ENCODE measurements at regions of chr6 and their contacts with region 1.

Region 1: DNA sequence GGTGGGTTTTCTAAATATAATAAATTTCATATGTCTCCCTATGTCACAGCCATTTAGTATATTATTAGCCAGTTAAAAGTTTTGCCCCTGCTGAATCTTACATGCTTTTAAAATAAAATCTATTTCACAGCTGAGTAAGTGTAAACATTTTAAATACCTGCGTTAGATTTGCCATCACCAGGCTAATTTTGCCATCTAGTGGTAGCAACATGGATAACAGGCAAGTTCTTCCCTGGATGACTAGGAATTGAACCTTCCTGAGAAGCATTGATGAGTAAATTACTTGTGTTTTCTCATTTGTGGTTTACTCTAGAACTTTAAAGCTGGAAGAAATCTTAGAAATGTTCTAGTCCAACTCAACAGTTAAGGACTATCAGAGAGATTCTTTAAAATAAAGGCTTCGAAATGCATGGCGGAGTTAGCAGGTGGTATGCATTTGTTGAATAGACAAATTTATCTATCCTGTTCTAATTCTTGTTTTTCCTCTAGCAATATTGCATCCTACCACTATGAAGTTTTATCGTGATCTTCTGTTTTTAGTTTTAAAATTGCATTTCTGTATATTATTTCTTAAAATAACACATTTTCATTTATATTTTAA is 2.6 kb downstream of the PRSS35 start:
- DNase-seq: peak; percentile 57
- H3K4me3 ChIP-seq: no peak overlapping the region
- H3K27ac ChIP-seq: no peak overlapping the region
- H3K4me1 ChIP-seq: peaks cover 2% of the 10 kb centered on the region
- H3K27me3 ChIP-seq: no peaks in the 10 kb centered on the region
- CTCF ChIP-seq: peak; percentile 75 to 87 (median 85)
- POLR2A ChIP-seq: no peak

Region 2: DNA sequence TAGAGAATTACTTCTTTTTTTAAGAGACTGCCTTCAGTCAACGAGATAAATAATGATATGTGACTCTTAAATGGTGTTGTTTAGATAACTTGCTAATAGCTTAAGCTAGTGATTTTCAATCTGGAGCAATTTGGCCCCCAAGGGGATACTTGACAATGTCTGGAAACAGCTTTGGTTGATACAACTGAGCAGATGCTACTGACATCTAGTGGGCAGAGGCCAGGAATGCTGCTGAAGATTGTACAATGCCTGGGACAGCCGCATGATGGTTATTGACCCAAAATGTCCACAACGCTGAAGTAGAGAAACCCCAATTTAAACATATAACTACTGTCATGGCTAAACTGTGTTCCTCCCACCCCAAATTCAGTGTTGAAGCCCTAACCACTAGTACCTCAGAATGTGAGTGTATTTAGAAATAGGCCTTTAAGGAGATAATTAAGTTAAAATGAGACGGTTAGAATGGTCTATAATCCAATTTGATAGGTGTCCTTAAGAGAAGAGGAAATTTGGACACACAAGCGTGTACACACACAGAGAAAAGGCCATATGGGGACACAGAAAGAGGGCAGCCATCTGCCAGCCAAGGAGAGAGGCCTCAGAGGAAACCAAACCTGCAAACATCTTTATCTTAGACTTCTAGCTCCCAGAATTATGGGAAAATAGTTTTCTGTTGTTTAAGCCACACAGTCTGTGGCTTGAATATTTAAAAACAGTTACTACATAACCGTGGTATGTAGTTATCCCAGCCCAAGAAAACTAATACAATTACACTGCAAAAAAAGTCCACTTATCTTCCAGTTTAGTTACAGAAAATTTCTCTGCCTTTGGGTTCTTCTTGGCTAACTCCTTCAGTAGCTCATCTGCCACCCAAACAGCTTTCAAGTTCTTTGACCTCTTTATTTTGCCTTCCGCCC is 299.6 kb before region 1 on chr6:
- intact Hi-C with region 1: loop called (anchors 10 kb)
- DNase-seq: peak; percentile 82
- H3K4me3 ChIP-seq: no peak overlapping the region
- H3K27ac ChIP-seq: no peak overlapping the region
- H3K4me1 ChIP-seq: no peaks in the 10 kb centered on the region
- H3K27me3 ChIP-seq: no peaks in the 10 kb centered on the region
- CTCF ChIP-seq: peak; percentile 38 to 68 (median 65)
- POLR2A ChIP-seq: no peak

Region 3: DNA sequence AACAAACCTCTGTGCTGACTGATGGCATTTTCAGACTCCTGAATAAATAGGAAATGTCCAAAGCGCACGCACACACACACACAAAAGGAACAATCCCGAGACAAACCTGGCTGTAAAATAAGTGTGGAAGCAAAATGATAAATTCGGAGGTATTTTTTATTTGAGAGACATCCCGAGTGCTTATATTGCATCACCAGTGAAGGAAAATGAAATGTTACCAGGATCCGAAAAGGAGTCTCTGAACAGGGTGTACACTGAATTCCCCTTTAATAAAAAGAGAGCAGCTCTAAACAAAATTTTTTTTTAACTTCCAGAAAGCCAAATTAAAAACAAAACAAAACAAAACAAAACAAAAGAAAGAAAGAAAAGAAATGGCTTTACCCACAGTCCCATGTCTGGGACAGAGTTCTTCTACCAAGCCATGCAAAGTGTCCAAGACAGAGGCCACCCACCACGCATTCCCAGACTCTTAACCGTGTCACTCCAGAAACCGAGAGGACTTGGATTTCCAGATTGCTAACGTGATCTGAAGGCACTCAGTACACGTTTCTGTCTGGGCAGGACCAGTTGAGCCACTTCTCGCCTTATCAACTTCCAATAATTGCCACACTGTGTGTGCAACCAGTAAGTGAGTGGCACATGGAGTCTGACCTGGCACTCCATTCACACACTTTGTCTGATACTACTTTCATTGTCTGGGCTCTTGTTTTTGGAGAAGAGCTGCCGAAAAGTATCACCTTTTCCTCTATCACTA is 84.9 kb before region 1 on chr6:
- intact Hi-C with region 1: loop called (anchors 10 kb)
- DNase-seq: peak; percentile 70
- H3K4me3 ChIP-seq: peak overlapping the region; percentile 79 to 89
- H3K27ac ChIP-seq: peak overlapping the region; percentile 88 to 91
- H3K4me1 ChIP-seq: peaks cover 9% of the 10 kb centered on the region
- H3K27me3 ChIP-seq: no peaks in the 10 kb centered on the region
- CTCF ChIP-seq: no peak
- POLR2A ChIP-seq: no peak

Region 4: DNA sequence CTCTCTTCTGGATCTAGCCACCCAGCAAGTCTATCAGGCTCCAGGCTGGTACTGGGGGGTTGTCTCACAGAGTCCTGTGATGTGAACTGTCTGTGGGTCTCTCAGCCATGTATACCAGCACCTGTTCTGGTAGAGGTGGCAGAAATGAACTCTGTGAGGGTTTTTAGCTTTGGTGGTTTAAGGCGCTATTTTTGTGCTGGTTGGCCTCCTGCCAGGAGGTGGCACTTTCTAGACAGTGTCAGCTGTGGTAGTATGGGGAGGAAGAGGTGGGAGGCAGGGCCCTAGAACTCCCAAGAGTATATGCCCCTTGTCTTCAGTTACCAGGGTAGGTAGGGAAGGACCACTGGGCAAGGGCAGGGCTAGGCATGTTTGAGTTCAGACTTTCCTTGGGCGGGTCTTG is 118.2 kb after region 1 on chr6:
- intact Hi-C with region 1: no loop called
- DNase-seq: no peak
- H3K4me3 ChIP-seq: no peak overlapping the region
- H3K27ac ChIP-seq: no peak overlapping the region
- H3K4me1 ChIP-seq: no peaks in the 10 kb centered on the region
- H3K27me3 ChIP-seq: no peaks in the 10 kb centered on the region
- CTCF ChIP-seq: no peak
- POLR2A ChIP-seq: no peak

Measured in testis (tissue), 5 donors.